ENCODE measurements at regions of chr3 and their contacts with region 1.

Region 1: DNA sequence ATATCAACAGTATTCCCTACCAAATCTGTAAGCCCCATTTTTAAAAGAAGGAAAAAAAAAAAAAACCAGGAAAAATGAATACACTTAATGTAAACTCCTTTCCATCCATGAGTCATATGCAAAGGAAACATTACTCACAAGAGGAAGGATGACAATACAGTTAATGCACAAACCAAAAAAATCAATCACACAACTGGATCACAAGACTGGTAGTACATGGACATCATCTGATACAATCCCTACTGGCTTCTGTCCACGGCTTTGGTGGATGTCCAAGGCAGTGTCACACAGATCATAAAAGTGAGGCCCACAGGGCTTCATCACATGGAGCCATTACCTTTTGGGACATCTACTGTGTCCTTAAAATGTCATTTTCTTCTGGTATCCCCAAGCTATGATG is 44.0 kb downstream of the SUCLG2 start:
- DNase-seq: no peak
- CTCF ChIP-seq: no peak

Region 2: GRCh38 chr3:67635257-67635656 is 24.8 kb after region 1 on chr3:
- CTCF ChIA-PET with region 1: interaction called, 11 read pairs
- POLR2A ChIA-PET with region 1: no interaction called
- DNase-seq: no peak
- CTCF ChIP-seq: no peak

Region 3: DNA sequence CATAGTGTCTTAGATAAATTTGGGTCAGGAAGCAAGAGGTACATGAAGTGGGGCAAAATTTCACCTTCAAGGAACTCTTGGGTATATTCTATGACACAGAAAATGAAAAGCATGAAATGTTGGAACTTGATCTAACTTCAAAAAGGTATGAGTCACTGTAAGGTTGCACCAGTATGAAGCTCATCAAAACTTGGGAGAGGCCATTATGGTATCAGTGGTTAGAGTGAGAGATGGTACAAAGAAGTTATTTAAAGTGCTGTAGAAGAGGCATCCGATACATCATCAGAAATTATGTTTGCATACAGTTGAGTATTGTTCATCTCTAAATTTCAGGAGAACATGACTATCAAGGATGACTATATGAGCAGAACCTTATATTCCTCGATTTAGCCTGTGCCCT is 346.8 kb after region 1 on chr3:
- CTCF ChIA-PET with region 1: no interaction called
- POLR2A ChIA-PET with region 1: no interaction called
- DNase-seq: no peak
- CTCF ChIP-seq: no peak

Measured in GM10248 (cell line).